Naive thymus-derived CD8-positive, alpha-beta T cell (primary cell): ENCODE measurements at regions of chr12 and their contacts with region 1.

Region 1: DNA sequence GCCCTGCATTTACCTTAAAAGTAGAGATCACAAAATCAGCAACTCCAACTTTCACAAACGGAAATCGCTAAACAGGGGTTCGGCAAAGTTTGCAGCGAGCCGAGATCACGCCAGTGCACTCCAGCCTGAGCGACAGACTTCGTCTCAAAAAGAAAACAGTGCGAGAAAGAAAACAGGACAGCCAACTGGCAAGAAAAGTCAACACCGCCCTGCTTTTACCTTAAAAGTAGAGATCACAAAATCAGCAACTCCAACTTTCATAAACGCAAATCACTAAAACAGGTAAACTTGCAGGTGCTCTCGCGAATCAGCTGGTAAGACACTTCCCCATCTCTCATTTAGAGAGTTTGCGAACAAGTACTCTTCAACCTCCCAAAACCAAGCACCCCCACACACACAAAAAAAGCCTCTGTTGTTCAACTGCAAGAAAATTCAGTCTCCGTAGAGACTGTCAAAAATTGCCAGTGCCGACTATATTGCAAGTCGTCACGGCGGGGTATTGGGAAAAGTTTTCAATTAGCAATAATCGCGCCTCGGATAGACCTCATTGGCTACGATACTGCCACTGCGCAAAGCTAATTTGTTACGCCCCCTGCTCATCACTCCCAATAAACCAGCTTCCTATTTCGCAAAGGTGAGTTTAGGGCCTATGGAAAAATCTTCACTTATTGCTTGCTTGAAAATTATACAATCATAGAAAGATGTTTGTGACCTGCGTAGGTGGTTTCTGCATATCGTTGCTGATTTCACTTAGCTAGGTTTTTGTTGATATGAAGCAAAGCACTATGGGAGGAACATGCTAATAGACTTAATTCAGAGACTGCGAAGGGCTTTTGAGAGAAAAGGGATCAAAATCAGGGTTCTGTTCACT is at the start of gene RNU4-1:
- DNase-seq: peak; percentile 45 to 98 (median 81)
- ATAC-seq: peak; percentile 42 to 47
- H3K4me3 Mint-ChIP-seq: no peak within 1 kb of the TSS
- H3K27ac Mint-ChIP-seq: peak within 1 kb of the TSS in 2 of 10 donors; percentile 8 to 21
- H3K4me1 Mint-ChIP-seq: peaks cover 5 to 13% (median 6%) of the 10 kb centered on the region in 4 donors
- H3K27me3 Mint-ChIP-seq: no peaks in the 10 kb centered on the region
- polyA plus RNA-seq, gene RNU4-1: not detected

Region 2: GRCh38 chr12:120116792-120117651 is 175.9 kb before region 1 on chr12:
- POLR2A ChIA-PET with region 1: interaction called, 13 read pairs
- DNase-seq: peak; percentile 94 to 98 (median 98)
- ATAC-seq: peak; percentile 77
- H3K4me3 Mint-ChIP-seq: peak overlapping the region; percentile 70 to 95 (median 90)
- H3K27ac Mint-ChIP-seq: peak overlapping the region; percentile 76 to 95 (median 88)
- H3K4me1 Mint-ChIP-seq: peaks cover 40 to 81% (median 77%) of the 10 kb centered on the region in 4 donors
- H3K27me3 Mint-ChIP-seq: no peaks in the 10 kb centered on the region

Region 3: GRCh38 chr12:120228291-120229070 is 64.4 kb before region 1 on chr12:
- POLR2A ChIA-PET with region 1: interaction called, 92 read pairs
- DNase-seq: peak; percentile 78 to 94 (median 86)
- ATAC-seq: peak; percentile 85
- H3K4me3 Mint-ChIP-seq: peak overlapping the region; percentile 56 to 83 (median 74)
- H3K27ac Mint-ChIP-seq: peak overlapping the region; percentile 61 to 91 (median 84)
- H3K4me1 Mint-ChIP-seq: peaks cover 36 to 90% (median 84%) of the 10 kb centered on the region in 4 donors
- H3K27me3 Mint-ChIP-seq: no peaks in the 10 kb centered on the region

Region 4: DNA sequence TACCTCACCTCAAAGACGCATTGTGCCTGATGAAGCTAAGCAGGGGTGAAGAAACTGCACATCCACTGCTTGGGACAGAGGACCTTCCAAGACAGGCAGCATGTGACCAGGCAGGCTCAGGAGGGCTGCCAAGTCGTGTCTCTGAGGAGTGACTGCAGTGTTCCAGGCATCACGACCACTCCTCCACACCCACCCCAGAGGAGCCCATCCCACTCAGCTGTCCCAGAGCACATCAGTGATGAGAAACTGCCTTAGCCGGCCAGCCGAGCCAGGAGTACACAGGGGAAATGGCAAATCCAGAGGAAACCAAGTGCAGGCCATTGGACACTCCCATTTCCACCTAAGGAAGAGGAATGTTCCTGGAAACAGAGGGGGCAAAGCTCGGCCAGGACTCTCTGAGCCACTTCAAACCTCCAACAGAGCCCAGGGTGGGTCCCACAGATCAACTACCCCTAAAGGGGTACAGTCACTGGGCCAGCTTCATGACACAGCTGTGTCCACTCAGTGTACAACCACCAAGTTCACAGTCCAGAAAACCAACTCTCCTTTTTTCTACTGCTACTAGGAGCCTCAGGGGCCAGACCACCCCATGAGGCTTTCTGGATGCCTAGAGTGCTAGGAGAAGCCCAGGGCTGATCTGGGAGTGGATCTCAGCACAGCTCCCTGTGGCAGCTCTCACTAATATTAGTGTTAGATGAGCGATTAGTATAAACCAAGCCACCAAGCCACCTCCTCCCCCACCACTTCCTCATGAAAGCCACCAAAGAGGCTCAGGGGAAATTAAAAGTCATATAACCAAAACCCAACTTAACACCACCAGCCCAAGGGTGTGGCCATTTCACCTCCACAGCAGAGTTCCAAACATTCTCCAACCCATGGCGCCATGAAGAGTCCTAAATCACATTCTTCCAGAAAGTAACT is 42.8 kb before region 1 on chr12:
- POLR2A ChIA-PET with region 1: interaction called, 55 read pairs
- DNase-seq: peak in 3 of 10 donors; percentile 33 to 49 (median 37)
- ATAC-seq: no peak
- H3K4me3 Mint-ChIP-seq: peak overlapping the region; percentile 59 to 86 (median 78)
- H3K27ac Mint-ChIP-seq: peak overlapping the region; percentile 58 to 98 (median 94)
- H3K4me1 Mint-ChIP-seq: peaks cover 45 to 86% (median 84%) of the 10 kb centered on the region in 4 donors
- H3K27me3 Mint-ChIP-seq: peaks cover 0 to 3% (median 0%) of the 10 kb centered on the region in 5 donors

Region 5: GRCh38 chr12:120265473-120266179 is 27.3 kb before region 1 on chr12 and contains the start of gene PXN:
- POLR2A ChIA-PET with region 1: interaction called, 105 read pairs
- DNase-seq: peak; percentile 82 to 100 (median 92)
- ATAC-seq: peak; percentile 83 to 84
- H3K4me3 Mint-ChIP-seq: peak within 1 kb of the TSS; percentile 89 to 96 (median 94)
- H3K27ac Mint-ChIP-seq: peak within 1 kb of the TSS; percentile 82 to 96 (median 92)
- H3K4me1 Mint-ChIP-seq: peaks cover 16 to 49% (median 43%) of the 10 kb centered on the region in 4 donors
- H3K27me3 Mint-ChIP-seq: peaks cover 0 to 2% (median 0%) of the 10 kb centered on the region in 5 donors
- polyA plus RNA-seq, gene PXN: 64.3 to 95.6 (median 80.4) TPM

Region 6: GRCh38 chr12:120324841-120325417 is 32.0 kb after region 1 on chr12:
- POLR2A ChIA-PET with region 1: interaction called, 13 read pairs
- DNase-seq: no peak
- ATAC-seq: peak in 1 of 2 donors; percentile 9
- H3K4me3 Mint-ChIP-seq: peak overlapping the region in 7 of 10 donors; percentile 13 to 97 (median 92)
- H3K27ac Mint-ChIP-seq: peak overlapping the region in 2 of 10 donors; percentile 86 to 92
- H3K4me1 Mint-ChIP-seq: peaks cover 5 to 12% (median 7%) of the 10 kb centered on the region in 4 donors
- H3K27me3 Mint-ChIP-seq: no peaks in the 10 kb centered on the region

Region 7: GRCh38 chr12:120469450-120470149 is 176.7 kb after region 1 on chr12 and contains the start of gene SRSF9:
- POLR2A ChIA-PET with region 1: interaction called, 14 read pairs
- DNase-seq: peak; percentile 93 to 98 (median 97)
- ATAC-seq: peak; percentile 91 to 92
- H3K4me3 Mint-ChIP-seq: peak within 1 kb of the TSS; percentile 86 to 95 (median 92)
- H3K27ac Mint-ChIP-seq: peak within 1 kb of the TSS; percentile 85 to 95 (median 92)
- H3K4me1 Mint-ChIP-seq: peaks cover 6 to 60% (median 56%) of the 10 kb centered on the region in 4 donors
- H3K27me3 Mint-ChIP-seq: no peaks in the 10 kb centered on the region
- polyA plus RNA-seq, gene SRSF9: 181 to 198 (median 191) TPM